ENCODE measurements at regions of chr1 and their contacts with region 1.

Region 1: DNA sequence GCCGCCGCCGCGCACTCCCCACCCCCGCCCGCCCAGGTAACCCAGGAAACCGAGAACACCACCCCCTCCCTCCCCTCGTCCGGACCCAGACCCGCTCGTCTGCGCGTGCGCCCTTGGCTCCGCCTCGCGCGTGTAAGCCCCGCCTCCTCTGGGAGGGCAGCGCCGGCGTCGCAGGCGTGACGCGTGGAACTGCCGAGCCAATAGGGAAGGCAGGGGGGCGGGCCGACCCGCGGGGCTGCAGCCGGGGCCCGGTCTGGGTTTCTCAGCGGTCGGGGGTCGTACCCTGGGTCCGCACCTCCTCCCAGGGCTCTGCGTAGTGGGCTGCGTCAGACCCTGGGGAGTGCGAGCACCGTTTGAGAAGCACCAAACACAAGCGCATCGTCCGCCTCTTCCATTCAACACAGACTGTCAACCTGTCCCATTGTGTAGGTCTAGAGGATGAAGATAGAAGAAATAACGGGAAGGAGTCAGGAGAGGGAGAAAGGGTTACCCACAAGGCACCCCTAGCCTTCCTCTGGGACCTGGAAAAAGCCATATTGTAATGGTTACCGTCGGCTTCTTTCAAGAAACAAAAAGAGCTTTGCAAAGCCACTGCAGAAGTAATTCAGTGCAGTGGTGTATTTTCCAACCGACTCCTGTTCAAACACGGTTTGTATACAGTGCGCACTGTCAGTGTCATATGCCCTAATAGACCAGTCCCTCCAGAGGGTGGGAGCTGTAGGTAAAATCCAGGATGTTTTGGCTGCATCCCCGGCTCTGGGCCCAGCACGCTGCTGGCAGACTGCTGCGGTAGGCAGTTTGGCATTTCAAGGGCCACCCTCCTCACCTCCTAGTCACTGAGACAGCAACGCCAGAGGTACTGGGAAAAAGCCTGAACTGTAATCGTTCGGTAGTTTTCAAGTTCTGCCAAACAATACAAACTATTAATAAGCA is 473 bp upstream of the LYST start:
- DNase-seq: peak; percentile 98
- H3K4me3 Mint-ChIP-seq: peak overlapping the region; percentile 91
- H3K27ac Mint-ChIP-seq: peak overlapping the region; percentile 94
- H3K4me1 Mint-ChIP-seq: peaks cover 54% of the 10 kb centered on the region
- H3K27me3 Mint-ChIP-seq: no peaks in the 10 kb centered on the region

Region 2: DNA sequence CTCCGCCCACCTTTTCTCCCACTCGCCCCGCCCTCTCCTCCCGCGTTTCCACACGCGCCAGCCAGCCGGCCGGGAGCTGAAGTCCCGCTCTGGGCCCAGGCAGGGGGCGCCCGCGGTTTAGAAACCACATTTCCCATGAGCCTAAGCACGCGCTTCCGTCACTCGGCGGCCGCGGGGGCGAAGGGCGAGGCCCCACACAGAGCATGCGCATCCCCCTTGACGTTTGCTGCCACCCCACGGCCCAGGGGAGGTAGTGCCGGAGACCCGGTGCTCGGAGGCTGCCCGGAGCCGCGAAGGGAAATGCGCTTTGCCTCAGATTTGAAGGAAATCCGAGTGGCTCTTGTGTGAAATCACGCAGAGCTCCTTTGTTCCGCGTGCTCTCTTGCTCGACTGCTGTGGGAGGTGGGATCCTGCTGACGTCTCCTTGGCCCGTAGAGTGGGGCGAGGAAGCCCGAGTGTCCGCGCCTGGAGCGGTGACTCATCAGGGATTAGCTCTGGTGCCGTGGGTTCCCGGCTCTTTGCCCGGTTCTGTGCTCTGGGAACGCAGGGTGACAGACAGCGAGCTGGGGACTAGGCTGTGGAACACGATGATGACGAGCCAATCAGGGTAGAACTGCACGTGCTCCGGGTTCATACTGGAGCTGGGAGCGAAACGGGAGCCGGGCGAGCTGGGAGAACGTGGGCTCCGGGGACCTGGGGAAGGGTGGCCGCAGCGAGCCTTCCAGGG is 362.5 kb before region 1 on chr1:
- CTCF ChIA-PET with region 1: no interaction called
- POLR2A ChIA-PET with region 1: interaction called, 11 read pairs
- DNase-seq: peak; percentile 99
- H3K4me3 Mint-ChIP-seq: peak overlapping the region; percentile 94
- H3K27ac Mint-ChIP-seq: peak overlapping the region; percentile 98
- H3K4me1 Mint-ChIP-seq: peaks cover 26% of the 10 kb centered on the region
- H3K27me3 Mint-ChIP-seq: peaks cover 5% of the 10 kb centered on the region

Region 3: GRCh38 chr1:235855811-235856429 is 11.3 kb before region 1 on chr1:
- CTCF ChIA-PET with region 1: interaction called, 7 read pairs
- POLR2A ChIA-PET with region 1: interaction called, 19 read pairs
- DNase-seq: no peak
- H3K4me3 Mint-ChIP-seq: no peak overlapping the region
- H3K27ac Mint-ChIP-seq: no peak overlapping the region
- H3K4me1 Mint-ChIP-seq: peaks cover 21% of the 10 kb centered on the region
- H3K27me3 Mint-ChIP-seq: no peaks in the 10 kb centered on the region

Region 4: GRCh38 chr1:235878082-235878811 is 11.1 kb after region 1 on chr1:
- CTCF ChIA-PET with region 1: interaction called, 11 read pairs
- POLR2A ChIA-PET with region 1: interaction called, 41 read pairs
- DNase-seq: no peak
- H3K4me3 Mint-ChIP-seq: no peak overlapping the region
- H3K27ac Mint-ChIP-seq: no peak overlapping the region
- H3K4me1 Mint-ChIP-seq: peaks cover 78% of the 10 kb centered on the region
- H3K27me3 Mint-ChIP-seq: peaks cover 2% of the 10 kb centered on the region

Region 5: DNA sequence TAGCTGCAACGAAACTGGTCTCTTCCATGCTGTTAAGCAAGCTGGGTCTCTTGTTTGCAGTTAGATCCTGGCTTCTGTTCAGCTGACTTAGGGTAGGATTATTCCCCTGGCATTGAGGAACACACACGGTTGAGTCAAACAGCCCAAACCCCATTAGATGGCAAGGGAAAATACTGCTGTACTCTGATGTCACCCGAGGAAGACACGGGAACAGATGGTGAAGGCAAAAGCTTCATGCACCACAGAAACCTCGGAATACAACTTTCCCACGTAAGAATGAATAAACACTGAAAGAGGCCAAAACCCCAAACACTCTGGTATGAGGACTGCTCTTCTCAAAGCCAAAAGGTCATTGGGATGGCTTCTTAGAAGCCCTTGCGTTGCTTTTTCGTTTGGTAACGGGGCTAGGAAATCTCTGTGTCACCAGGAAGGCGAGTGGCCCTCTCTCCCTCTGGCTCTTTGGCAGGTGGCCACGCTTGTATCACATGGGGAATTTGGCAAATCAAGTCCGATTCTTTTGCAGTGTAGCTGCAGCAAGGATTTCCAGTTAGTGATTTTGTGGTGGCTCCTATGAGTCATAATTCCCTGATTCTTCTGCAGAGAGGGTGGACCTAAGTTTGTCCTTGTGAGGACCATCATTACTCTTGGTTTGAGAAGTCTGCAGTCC is 16.2 kb after region 1 on chr1:
- CTCF ChIA-PET with region 1: interaction called, 14 read pairs
- POLR2A ChIA-PET with region 1: interaction called, 29 read pairs
- DNase-seq: no peak
- H3K4me3 Mint-ChIP-seq: peak overlapping the region; percentile 19
- H3K27ac Mint-ChIP-seq: peak overlapping the region; percentile 34
- H3K4me1 Mint-ChIP-seq: peaks cover 64% of the 10 kb centered on the region
- H3K27me3 Mint-ChIP-seq: peaks cover 2% of the 10 kb centered on the region

Region 6: DNA sequence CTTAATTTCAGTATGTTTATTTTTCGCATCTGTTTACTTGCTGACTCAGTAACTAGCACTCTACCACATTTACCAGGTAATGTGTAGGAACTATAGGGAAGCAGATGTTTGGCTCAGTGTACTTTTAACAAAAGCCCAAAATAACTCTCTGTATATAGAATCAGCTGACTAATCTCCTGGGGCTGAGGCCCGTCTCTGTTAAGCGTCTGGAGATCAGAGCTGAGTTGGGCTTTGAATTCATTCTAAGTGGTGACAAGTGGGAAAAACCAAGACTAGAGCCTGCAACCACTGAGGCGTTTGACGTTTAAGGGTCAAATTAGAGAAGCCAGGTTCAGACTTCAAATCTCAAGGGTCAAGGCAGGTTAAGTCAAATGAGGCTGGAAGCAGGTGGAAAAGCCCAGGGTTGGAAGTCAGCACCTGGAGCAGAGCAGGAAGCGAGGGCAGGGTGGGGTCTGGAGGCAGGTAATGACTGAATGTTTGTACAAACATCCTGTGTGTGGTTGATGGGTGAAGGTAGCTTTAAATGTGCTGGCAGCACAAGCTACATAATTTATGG is 56.4 kb after region 1 on chr1:
- CTCF ChIA-PET with region 1: interaction called, 4 read pairs
- POLR2A ChIA-PET with region 1: interaction called, 16 read pairs
- DNase-seq: peak; percentile 51
- H3K4me3 Mint-ChIP-seq: peak overlapping the region; percentile 8
- H3K27ac Mint-ChIP-seq: peak overlapping the region; percentile 87
- H3K4me1 Mint-ChIP-seq: peaks cover 28% of the 10 kb centered on the region
- H3K27me3 Mint-ChIP-seq: no peaks in the 10 kb centered on the region

Region 7: GRCh38 chr1:235999259-235999925 is 132.2 kb after region 1 on chr1:
- CTCF ChIA-PET with region 1: no interaction called
- POLR2A ChIA-PET with region 1: interaction called, 24 read pairs
- DNase-seq: peak; percentile 77
- H3K4me3 Mint-ChIP-seq: peak overlapping the region; percentile 22
- H3K27ac Mint-ChIP-seq: peak overlapping the region; percentile 92
- H3K4me1 Mint-ChIP-seq: peaks cover 82% of the 10 kb centered on the region
- H3K27me3 Mint-ChIP-seq: no peaks in the 10 kb centered on the region